ENCODE measurements at regions of chr4 and their contacts with region 1.

Region 1: DNA sequence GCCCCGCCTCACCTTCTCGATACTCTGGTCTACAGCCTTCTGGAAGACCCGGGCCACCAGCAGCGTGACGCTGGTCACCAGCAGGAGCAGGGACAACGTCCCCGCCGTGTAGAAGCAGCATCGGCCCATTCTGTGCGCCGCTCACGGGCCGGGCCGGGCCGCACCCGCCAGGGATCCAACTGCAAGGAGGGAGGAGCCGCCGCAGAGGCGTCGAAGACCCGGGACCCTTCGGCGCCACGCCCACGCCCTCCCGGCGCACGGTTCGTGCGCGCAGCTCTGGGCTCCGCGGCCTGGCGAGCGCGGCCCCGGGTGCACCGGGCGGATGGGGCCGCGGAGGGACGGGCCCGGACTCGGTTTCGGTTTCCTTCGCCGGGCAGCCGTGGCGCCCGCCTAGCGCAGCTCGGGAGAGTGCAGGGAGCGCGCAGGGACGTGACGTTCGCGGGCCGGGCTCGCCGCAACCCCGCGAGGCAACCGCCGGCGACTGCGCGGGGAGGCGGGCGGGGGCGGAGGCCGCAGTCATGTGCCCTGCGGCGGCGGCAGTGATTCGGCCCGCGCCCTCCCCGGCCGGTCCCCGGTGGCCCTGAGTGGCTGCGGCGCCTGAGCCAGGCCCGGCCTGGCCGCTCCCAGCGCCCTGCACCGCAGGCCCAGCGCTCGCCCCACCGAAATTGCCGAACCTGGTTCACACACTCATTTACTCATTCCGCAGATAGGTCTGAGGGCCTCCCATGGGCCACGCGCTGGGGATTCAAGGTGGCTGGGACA is at the start of gene SCARB2:
- DNase-seq: peak; percentile 72 to 78 (median 74)
- ATAC-seq: peak; percentile 82
- H3K4me3 ChIP-seq: peak within 1 kb of the TSS; percentile 76
- H3K4me3 Mint-ChIP-seq: peak within 1 kb of the TSS; percentile 87 to 96 (median 94)
- H3K27ac ChIP-seq: peak within 1 kb of the TSS; percentile 85
- H3K27ac Mint-ChIP-seq: peak within 1 kb of the TSS; percentile 89 to 97 (median 95)
- H3K4me1 ChIP-seq: peaks cover 21 to 39% of the 10 kb centered on the region in 2 donors
- H3K4me1 Mint-ChIP-seq: peaks cover 36 to 71% (median 66%) of the 10 kb centered on the region in 7 donors
- H3K27me3 ChIP-seq: no peaks in the 10 kb centered on the region
- H3K27me3 Mint-ChIP-seq: peaks cover 0 to 28% (median 0%) of the 10 kb centered on the region in 5 donors
- total RNA-seq, gene SCARB2: 13.5 to 35.7 (median 29.1) TPM

Region 2: DNA sequence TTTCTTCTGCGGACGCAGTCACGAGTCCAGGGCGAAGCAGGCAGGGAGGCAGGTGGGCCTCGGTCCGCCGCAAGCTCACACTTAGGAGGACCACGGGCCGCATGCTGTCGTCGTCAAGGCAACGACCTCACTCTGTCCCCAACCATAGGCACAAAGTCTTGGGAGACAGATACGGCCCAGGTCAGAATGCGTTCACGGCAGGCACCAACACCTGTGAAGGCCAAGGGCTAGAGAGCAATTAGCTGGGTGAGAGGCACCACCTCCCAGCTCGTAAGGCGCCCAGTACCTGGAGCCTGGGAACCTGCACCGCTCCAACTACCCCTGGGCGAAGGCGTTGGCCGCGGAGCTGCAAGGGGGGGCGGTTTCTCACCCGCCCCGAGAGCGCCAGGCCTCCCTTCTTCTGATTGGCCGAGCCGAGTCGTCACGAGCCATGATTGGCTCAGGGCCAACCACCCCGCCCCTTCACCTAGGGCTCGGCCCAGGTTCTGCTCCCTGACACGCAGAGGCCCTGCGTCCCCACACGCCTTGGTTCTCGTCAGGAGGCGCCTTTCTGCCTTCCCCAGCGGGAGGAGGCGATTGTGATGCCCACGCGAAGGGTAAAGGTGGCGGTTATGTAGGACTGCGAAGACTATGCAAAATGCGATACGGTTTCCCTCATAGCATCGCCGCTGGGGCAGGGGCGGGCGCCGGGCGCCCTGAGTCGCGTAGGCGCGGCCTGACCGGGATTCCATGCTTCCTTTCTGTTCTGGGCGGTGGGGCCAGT is 583.2 kb before region 1 on chr4 and contains the start of gene CDKL2:
- CTCF ChIA-PET with region 1: no interaction called
- POLR2A ChIA-PET with region 1: no interaction called
- intact Hi-C with region 1: loop called in 1 of 2 experiments (anchors 10 kb)
- DNase-seq: peak; percentile 85 to 93 (median 91)
- ATAC-seq: peak; percentile 100
- H3K4me3 ChIP-seq: peak within 1 kb of the TSS; percentile 74
- H3K4me3 Mint-ChIP-seq: peak within 1 kb of the TSS; percentile 88 to 97 (median 94)
- H3K27ac ChIP-seq: peak within 1 kb of the TSS; percentile 73
- H3K27ac Mint-ChIP-seq: peak within 1 kb of the TSS; percentile 66 to 94 (median 86)
- H3K4me1 ChIP-seq: peaks cover 0 to 7% of the 10 kb centered on the region in 2 donors
- H3K4me1 Mint-ChIP-seq: peaks cover 6 to 18% (median 11%) of the 10 kb centered on the region in 7 donors
- H3K27me3 ChIP-seq: no peaks in the 10 kb centered on the region
- H3K27me3 Mint-ChIP-seq: peaks cover 0 to 12% (median 0%) of the 10 kb centered on the region in 5 donors
- total RNA-seq, gene CDKL2: 0.22 to 1.2 (median 0.34) TPM

Region 3: GRCh38 chr4:75989846-75990528 is 223.6 kb before region 1 on chr4:
- CTCF ChIA-PET with region 1: no interaction called
- POLR2A ChIA-PET with region 1: no interaction called
- intact Hi-C with region 1: loop called (anchors 5 to 10 kb)
- DNase-seq: peak in 4 of 9 donors; percentile 2 to 7 (median 4)
- ATAC-seq: no peak
- H3K4me3 ChIP-seq: peak overlapping the region; percentile 86
- H3K4me3 Mint-ChIP-seq: peak overlapping the region; percentile 87 to 98 (median 96)
- H3K27ac ChIP-seq: peak overlapping the region; percentile 86
- H3K27ac Mint-ChIP-seq: peak overlapping the region; percentile 85 to 97 (median 93)
- H3K4me1 ChIP-seq: peaks cover 13 to 39% of the 10 kb centered on the region in 2 donors
- H3K4me1 Mint-ChIP-seq: peaks cover 24 to 38% (median 30%) of the 10 kb centered on the region in 7 donors
- H3K27me3 ChIP-seq: no peaks in the 10 kb centered on the region
- H3K27me3 Mint-ChIP-seq: peaks cover 0 to 8% (median 2%) of the 10 kb centered on the region in 5 donors

Region 4: GRCh38 chr4:76179398-76180318 is 33.9 kb before region 1 on chr4:
- CTCF ChIA-PET with region 1: interaction called, 13 read pairs
- POLR2A ChIA-PET with region 1: interaction called, 6 read pairs
- intact Hi-C with region 1: loop called (anchors 1 to 2 kb)
- DNase-seq: peak; percentile 63 to 82 (median 72)
- ATAC-seq: peak; percentile 95
- H3K4me3 ChIP-seq: no peak overlapping the region
- H3K4me3 Mint-ChIP-seq: no peak overlapping the region
- H3K27ac ChIP-seq: no peak overlapping the region
- H3K27ac Mint-ChIP-seq: peak overlapping the region in 2 of 9 donors; percentile 27 to 53
- H3K4me1 ChIP-seq: no peaks in the 10 kb centered on the region
- H3K4me1 Mint-ChIP-seq: peaks cover 0 to 3% (median 0%) of the 10 kb centered on the region in 7 donors
- H3K27me3 ChIP-seq: no peaks in the 10 kb centered on the region
- H3K27me3 Mint-ChIP-seq: no peaks in the 10 kb centered on the region

Region 5: GRCh38 chr4:76305971-76306881 is 92.6 kb after region 1 on chr4 and contains the start of gene STBD1:
- CTCF ChIA-PET with region 1: no interaction called
- POLR2A ChIA-PET with region 1: interaction called, 3 read pairs
- intact Hi-C with region 1: loop called (anchors 2 kb)
- DNase-seq: peak in 7 of 9 donors; percentile 5 to 54 (median 19)
- ATAC-seq: peak; percentile 68
- H3K4me3 ChIP-seq: peak within 1 kb of the TSS; percentile 62
- H3K4me3 Mint-ChIP-seq: peak within 1 kb of the TSS; percentile 75 to 92 (median 82)
- H3K27ac ChIP-seq: peak within 1 kb of the TSS; percentile 20
- H3K27ac Mint-ChIP-seq: peak within 1 kb of the TSS in 7 of 9 donors; percentile 22 to 83 (median 63)
- H3K4me1 ChIP-seq: peaks cover 18% of the 10 kb centered on the region in 2 donors
- H3K4me1 Mint-ChIP-seq: peaks cover 20 to 37% (median 32%) of the 10 kb centered on the region in 7 donors
- H3K27me3 ChIP-seq: no peaks in the 10 kb centered on the region
- H3K27me3 Mint-ChIP-seq: peaks cover 0 to 42% (median 5%) of the 10 kb centered on the region in 5 donors
- total RNA-seq, gene STBD1: 0.62 to 2.1 (median 0.85) TPM in 4 of 5 experiments, not detected in the other

Region 6: DNA sequence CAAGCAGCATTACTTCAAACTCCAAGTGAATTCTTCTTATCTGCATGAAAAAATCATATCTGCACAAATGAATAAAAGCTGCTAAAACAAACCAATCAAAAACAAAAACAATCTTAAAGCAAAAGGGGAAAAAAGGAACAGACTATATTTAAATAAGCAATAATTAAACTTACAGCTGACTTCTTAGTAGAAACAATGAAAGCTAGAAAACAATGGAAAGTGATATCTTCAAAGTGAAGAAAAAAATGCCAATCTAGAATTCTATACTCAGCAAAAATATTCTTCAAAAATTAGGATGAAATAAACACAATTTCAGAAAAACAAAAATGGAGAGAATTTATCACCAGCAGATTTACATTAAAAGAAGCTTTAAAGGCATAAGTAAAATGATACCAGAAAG is 112.9 kb after region 1 on chr4:
- CTCF ChIA-PET with region 1: no interaction called
- POLR2A ChIA-PET with region 1: no interaction called
- intact Hi-C with region 1: no loop called
- DNase-seq: no peak
- ATAC-seq: no peak
- H3K4me3 ChIP-seq: no peak overlapping the region
- H3K4me3 Mint-ChIP-seq: no peak overlapping the region
- H3K27ac ChIP-seq: no peak overlapping the region
- H3K27ac Mint-ChIP-seq: peak overlapping the region in 1 of 9 donors; percentile 15
- H3K4me1 ChIP-seq: no peaks in the 10 kb centered on the region
- H3K4me1 Mint-ChIP-seq: no peaks in the 10 kb centered on the region
- H3K27me3 ChIP-seq: no peaks in the 10 kb centered on the region
- H3K27me3 Mint-ChIP-seq: peaks cover 0 to 11% (median 7%) of the 10 kb centered on the region in 5 donors

Region 7: GRCh38 chr4:77052352-77052751 is 838.8 kb after region 1 on chr4:
- CTCF ChIA-PET with region 1: no interaction called
- POLR2A ChIA-PET with region 1: no interaction called
- intact Hi-C with region 1: no loop called
- DNase-seq: peak in 7 of 9 donors; percentile 18 to 59 (median 42)
- ATAC-seq: peak; percentile 74
- H3K4me3 ChIP-seq: no peak overlapping the region
- H3K4me3 Mint-ChIP-seq: no peak overlapping the region
- H3K27ac ChIP-seq: no peak overlapping the region
- H3K27ac Mint-ChIP-seq: peak overlapping the region in 6 of 9 donors; percentile 14 to 83 (median 70)
- H3K4me1 ChIP-seq: no peaks in the 10 kb centered on the region
- H3K4me1 Mint-ChIP-seq: peaks cover 0 to 19% (median 9%) of the 10 kb centered on the region in 7 donors
- H3K27me3 ChIP-seq: no peaks in the 10 kb centered on the region
- H3K27me3 Mint-ChIP-seq: no peaks in the 10 kb centered on the region

Measured in naive thymus-derived CD4-positive, alpha-beta T cell (primary cell).